ENCODE measurements at regions of chr22 and their contacts with region 1.

Region 1: DNA sequence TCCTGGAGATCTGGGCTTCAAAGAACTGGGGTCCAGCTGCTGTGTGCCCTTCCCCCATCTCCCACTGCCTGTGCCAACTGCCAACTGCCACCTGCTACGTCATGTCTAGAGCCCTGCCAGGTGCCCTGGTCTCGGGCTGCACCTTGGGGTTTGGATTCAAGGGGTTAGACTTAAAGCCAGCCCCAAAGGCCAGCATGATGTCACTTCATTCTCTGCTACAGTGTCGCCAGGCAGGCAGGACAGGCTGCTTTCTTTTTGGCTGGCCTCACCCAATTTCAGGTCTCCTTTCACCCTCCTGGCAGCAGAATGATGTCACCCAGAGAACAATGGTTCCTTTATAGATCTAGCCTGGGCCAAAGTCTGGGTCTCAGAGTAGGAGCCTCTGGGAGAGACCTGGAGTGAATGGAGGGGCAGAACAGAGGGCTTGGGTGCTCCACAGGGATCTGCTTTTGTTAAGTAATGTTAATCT is 79.5 kb upstream of the CRYBB3 start:
- DNase-seq: no peak
- ATAC-seq: no peak
- H3K4me3 ChIP-seq: no peak overlapping the region
- H3K27ac ChIP-seq: no peak overlapping the region
- H3K4me1 ChIP-seq: no peaks in the 10 kb centered on the region
- H3K27me3 ChIP-seq: no peaks in the 10 kb centered on the region
- CTCF ChIP-seq: no peak
- POLR2A ChIP-seq: no peak
- RAD21 ChIP-seq: no peak

Region 2: GRCh38 chr22:25136953-25137576 is 16.9 kb after region 1 on chr22:
- CTCF ChIA-PET with region 1: interaction called, 10 read pairs
- POLR2A ChIA-PET with region 1: no interaction called
- dilution Hi-C with region 1: no loop called
- in situ Hi-C with region 1: no loop called
- intact Hi-C with region 1: no loop called
- DNase-seq: no peak
- ATAC-seq: no peak
- H3K4me3 ChIP-seq: no peak overlapping the region
- H3K27ac ChIP-seq: no peak overlapping the region
- H3K4me1 ChIP-seq: no peaks in the 10 kb centered on the region
- H3K27me3 ChIP-seq: no peaks in the 10 kb centered on the region
- CTCF ChIP-seq: no peak
- POLR2A ChIP-seq: no peak
- RAD21 ChIP-seq: no peak

Measured in IMR-90 (cell line).